ENCODE measurements at regions of chr3 and their contacts with region 1.

Region 1: DNA sequence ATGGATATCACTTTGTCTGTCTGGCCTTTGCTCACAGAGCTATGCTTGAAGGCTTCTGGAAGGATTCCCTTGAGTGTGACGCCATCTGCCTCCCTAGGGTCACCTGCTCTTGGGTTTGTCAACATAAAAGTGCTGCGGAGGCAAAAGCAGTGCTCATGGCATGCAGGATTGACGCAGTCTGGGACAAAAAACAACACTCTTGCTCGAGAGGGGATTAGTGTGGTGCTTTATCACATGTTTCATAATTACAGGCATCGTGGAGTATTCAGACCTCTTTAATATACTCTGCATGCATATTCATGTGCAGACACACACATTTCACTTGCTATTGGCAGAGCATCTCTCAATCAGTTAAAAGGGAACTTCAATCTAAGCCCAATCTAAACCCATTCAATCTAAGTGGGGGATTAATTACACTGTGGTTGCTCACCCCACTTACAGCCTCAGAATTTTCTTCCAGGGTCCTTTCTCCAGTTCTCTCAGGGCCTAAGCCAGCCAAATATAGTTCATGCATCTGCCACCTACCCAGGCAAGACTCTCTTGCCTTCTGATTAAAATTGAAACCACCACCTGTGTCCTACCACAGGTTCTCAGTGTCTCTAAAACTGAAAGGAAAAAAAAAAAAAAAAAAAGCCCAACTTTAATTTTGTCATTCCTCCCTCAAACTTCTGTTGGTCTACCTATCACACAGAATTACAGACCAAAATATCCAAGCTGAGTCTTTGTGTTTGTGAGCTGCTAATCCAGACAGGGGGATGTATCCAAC is 75.6 kb downstream of the BFSP2 start:
- DNase-seq: no peak
- H3K4me3 ChIP-seq: no peak overlapping the region
- H3K27me3 ChIP-seq: no peaks in the 10 kb centered on the region
- CTCF ChIP-seq: no peak

Region 2: DNA sequence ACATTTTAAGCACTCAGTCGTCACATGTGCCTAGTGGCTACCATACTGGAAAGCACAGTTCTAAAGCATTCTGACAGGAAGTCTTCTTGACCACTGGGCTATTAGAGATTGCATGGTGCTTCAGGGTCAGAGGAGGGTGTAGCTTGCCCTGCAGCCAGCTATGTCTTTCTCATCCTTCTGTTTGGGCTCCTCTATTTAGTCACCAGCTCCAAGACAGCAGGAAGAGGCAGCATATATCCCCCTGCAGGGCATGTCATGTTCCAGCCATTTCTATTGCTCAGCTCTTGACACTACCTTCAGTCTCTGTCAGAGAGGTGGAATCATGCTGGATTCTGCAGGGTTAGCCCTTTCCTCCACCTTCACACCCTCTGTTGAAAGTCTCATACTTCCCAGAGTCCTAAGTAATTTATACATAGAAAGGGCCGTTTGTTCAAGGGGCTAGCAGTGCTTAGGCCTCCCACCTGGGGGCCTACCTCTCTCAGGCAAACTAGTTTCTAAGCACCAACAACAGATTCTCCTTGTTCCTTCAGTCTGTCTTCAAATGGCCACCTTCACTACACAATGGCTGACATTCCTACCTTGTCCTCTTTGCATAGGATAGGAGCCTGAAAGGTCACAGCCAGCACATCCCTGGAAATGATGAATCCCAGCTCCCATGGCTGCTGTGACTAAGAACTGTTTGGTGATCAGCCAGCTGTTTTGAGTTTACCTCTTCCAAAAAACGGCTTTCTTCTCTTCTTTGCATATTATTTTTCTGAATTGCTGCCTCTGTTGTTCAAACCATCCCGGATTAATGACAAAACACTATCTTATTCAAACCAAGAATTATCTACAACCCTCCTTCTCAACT is 191.2 kb before region 1 on chr3:
- CTCF ChIA-PET with region 1: no interaction called
- POLR2A ChIA-PET with region 1: no interaction called
- DNase-seq: no peak
- H3K4me3 ChIP-seq: no peak overlapping the region
- H3K27me3 ChIP-seq: no peaks in the 10 kb centered on the region
- CTCF ChIP-seq: no peak

Region 3: GRCh38 chr3:133487920-133488540 is 12.6 kb after region 1 on chr3:
- CTCF ChIA-PET with region 1: interaction called, 13 read pairs
- POLR2A ChIA-PET with region 1: no interaction called
- DNase-seq: no peak
- H3K4me3 ChIP-seq: no peak overlapping the region
- H3K27me3 ChIP-seq: no peaks in the 10 kb centered on the region
- CTCF ChIP-seq: peak; percentile 60

Measured in BJ (cell line).